Sigmoid colon (tissue), 7 donors: ENCODE measurements at regions of chr12 and their contacts with region 1.

Region 1: GRCh38 chr12:133080368-133081158 is at the start of gene ZNF140:
- DNase-seq: peak; percentile 98
- H3K4me3 ChIP-seq: peak within 1 kb of the TSS; percentile 63 to 90 (median 78)
- H3K27ac ChIP-seq: peak within 1 kb of the TSS; percentile 92 to 98 (median 96)
- H3K4me1 ChIP-seq: peaks cover 0 to 10% (median 4%) of the 10 kb centered on the region in 4 donors
- H3K27me3 ChIP-seq: no peaks in the 10 kb centered on the region
- CTCF ChIP-seq: peak in 2 of 4 experiments; percentile 23 to 38
- EP300 ChIP-seq: peak in 2 of 4 donors; percentile 6 to 24
- POLR2A ChIP-seq: peak; percentile 49 to 56
- total RNA-seq, gene ZNF140: 12.4 to 18.8 (median 15.4) TPM

Region 2: GRCh38 chr12:132610051-132610759 is 470.4 kb before region 1 on chr12 and contains the start of gene LRCOL1:
- intact Hi-C with region 1: no loop called
- DNase-seq: no peak
- H3K4me3 ChIP-seq: peak within 1 kb of the TSS in 2 of 4 donors; percentile 7 to 30
- H3K27ac ChIP-seq: no peak within 1 kb of the TSS
- H3K4me1 ChIP-seq: peaks cover 0 to 10% (median 2%) of the 10 kb centered on the region in 4 donors
- H3K27me3 ChIP-seq: peaks cover 0 to 64% (median 39%) of the 10 kb centered on the region in 3 donors
- CTCF ChIP-seq: no peak
- EP300 ChIP-seq: no peak
- POLR2A ChIP-seq: no peak
- total RNA-seq, gene LRCOL1: 0.49 to 1.4 TPM in 2 of 4 donors, not detected in the others

Region 3: GRCh38 chr12:132729541-132730320 is 350.8 kb before region 1 on chr12:
- intact Hi-C with region 1: no loop called
- DNase-seq: no peak
- H3K4me3 ChIP-seq: no peak overlapping the region
- H3K27ac ChIP-seq: no peak overlapping the region
- H3K4me1 ChIP-seq: no peaks in the 10 kb centered on the region
- H3K27me3 ChIP-seq: no peaks in the 10 kb centered on the region
- CTCF ChIP-seq: no peak
- EP300 ChIP-seq: no peak
- POLR2A ChIP-seq: no peak

Region 4: GRCh38 chr12:132828706-132829534 is 251.6 kb before region 1 on chr12 and contains the start of gene GOLGA3:
- intact Hi-C with region 1: loop called (anchors 5 kb)
- DNase-seq: peak; percentile 96
- H3K4me3 ChIP-seq: peak within 1 kb of the TSS; percentile 67 to 98 (median 86)
- H3K27ac ChIP-seq: peak within 1 kb of the TSS; percentile 89 to 98 (median 92)
- H3K4me1 ChIP-seq: peaks cover 0 to 34% (median 21%) of the 10 kb centered on the region in 4 donors
- H3K27me3 ChIP-seq: no peaks in the 10 kb centered on the region
- CTCF ChIP-seq: no peak
- EP300 ChIP-seq: peak in 1 of 4 donors; percentile 31
- POLR2A ChIP-seq: peak in 1 of 2 donors; percentile 19
- total RNA-seq, gene GOLGA3: 45.7 to 78.4 (median 56.2) TPM

Region 5: DNA sequence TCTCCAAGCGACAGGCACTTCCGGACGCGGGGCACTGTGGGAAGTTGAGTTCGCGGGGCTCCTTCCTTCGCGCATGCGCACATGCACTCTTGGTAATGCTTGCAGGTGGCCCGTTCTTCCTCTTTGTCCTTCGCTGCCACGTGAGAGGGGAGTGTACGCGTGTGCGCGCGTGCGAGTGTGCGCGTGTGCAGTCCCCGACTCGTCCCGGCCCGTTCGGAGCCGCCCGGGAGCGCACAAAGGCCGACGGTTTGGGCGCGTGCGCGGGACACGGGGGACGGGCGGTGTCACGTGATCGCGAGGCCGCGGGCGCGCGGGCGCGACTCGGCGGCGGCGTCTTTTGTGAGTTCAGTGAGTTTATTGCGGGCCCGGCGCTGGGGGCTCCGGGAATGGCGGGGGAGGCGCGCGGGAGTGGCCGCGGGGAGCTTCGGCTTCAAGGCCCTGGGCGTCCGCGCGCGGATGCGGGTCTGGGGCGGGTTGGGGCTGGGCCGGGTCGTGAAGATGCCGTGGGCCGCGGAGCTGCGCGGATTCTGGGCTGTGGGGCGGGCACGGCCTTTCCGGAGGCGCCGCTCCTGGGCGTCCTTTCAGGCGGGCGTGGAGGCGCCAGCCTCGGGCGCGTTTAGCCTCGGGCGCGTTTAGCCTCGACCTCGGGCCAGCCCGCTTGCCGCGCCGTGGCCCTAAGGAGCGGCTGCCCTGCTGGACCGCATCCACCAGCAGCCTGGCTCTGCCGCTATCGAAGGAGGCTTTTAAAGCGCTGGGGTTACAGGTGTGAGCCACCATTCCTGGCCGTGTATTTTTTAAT is 43.2 kb before region 1 on chr12 and contains the start of gene ZNF84:
- intact Hi-C with region 1: loop called (anchors 1 kb)
- DNase-seq: peak; percentile 98
- H3K4me3 ChIP-seq: peak within 1 kb of the TSS; percentile 64 to 84 (median 80)
- H3K27ac ChIP-seq: peak within 1 kb of the TSS; percentile 90 to 97 (median 95)
- H3K4me1 ChIP-seq: peaks cover 0 to 13% (median 3%) of the 10 kb centered on the region in 4 donors
- H3K27me3 ChIP-seq: no peaks in the 10 kb centered on the region
- CTCF ChIP-seq: no peak
- EP300 ChIP-seq: peak in 1 of 4 donors; percentile 68
- POLR2A ChIP-seq: peak; percentile 18 to 33
- total RNA-seq, gene ZNF84: 28.8 to 32.7 (median 31.4) TPM

Region 6: DNA sequence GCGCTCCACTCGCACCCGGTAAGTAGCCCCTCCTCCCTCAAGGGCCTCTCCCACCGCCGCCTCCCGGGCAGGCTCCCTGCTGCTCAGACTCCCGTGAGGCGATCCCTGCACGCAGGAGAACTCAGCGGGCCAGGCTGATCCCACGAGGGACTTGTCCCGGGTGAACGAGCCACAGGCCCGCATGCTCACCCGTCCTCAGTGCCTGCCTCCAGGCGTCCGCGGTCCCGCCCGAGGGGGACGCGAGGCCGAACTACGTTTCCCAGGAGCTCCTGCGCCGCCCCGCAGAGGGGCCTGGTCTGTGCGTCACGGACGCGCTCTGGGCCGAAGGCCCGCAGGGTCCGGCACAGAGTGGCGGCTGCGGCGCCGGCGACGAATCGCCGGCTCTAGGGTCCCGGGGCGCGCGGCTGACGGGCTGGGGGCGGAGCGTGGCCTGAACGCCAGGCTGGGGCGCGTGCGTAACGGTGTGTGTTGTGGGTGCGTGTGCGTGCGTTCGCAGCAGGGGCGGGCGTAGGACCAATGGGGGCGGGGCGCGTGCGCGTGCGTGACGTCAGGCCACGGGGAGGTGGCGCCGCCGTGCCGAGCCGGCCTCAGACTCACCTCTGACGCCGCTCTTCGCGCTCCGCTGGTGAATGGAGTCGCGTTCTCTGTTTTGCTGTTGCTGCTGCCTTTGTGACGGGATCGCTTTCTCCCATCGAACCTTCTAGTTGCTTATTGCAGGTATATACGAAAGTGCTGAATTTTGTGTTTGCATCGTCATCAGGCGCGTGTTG is 49.7 kb after region 1 on chr12 and contains the starts of genes ZNF10 and ZNF891:
- intact Hi-C with region 1: loop called (anchors 1 kb)
- DNase-seq: peak; percentile 98
- H3K4me3 ChIP-seq: peak within 1 kb of the TSS; percentile 77 to 92 (median 82)
- H3K27ac ChIP-seq: peak within 1 kb of the TSS; percentile 95 to 98 (median 96)
- H3K4me1 ChIP-seq: peaks cover 0 to 14% (median 6%) of the 10 kb centered on the region in 4 donors
- H3K27me3 ChIP-seq: no peaks in the 10 kb centered on the region
- CTCF ChIP-seq: no peak
- EP300 ChIP-seq: peak; percentile 15 to 91 (median 74)
- POLR2A ChIP-seq: peak; percentile 69 to 72
- total RNA-seq, gene ZNF10: 10.5 to 22.8 (median 13.1) TPM
- total RNA-seq, gene ZNF891: 3.1 to 6.1 (median 4.4) TPM

Region 7: DNA sequence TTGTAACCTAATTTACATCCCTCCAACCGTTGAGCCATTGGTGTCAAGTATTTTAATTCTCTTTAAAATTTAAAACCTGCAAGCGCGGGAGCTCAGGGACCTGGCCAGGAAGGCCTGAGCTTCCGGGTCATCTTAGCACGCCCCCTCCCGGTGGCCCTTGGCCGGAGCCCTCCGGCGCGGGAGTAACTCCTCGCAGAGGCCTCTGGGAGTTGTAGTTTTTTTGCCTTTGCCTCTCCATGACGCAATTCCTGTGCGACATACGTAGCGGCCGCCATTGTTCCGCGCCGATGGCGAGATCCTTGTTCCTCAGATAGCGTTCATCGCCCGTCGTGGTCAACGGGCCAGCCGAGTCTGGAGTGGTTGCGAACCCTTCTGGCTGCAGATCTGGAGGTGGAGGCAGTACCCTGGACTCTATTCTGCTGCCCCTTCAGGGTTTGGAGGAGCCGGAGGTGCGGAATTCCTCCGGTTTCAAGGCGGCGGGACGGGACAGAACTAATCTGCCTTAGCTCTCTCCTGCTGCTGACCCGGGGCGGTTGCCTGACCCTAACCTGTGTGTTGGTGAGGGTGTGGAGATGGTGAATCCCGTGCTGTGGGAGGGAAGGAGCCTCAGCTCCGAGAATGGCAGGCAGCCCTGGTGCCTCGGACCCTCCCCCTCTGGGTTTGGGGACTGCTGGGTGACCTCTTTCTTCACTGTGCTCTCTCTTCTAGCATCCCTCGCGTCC is 100.8 kb after region 1 on chr12 and contains the start of gene ZNF268:
- intact Hi-C with region 1: loop called (anchors 1 kb)
- DNase-seq: peak; percentile 94
- H3K4me3 ChIP-seq: peak within 1 kb of the TSS; percentile 64 to 82 (median 76)
- H3K27ac ChIP-seq: peak within 1 kb of the TSS; percentile 69 to 81 (median 76)
- H3K4me1 ChIP-seq: peaks cover 0 to 13% (median 6%) of the 10 kb centered on the region in 4 donors
- H3K27me3 ChIP-seq: no peaks in the 10 kb centered on the region
- CTCF ChIP-seq: peak; percentile 45 to 68 (median 58)
- EP300 ChIP-seq: peak in 2 of 4 donors; percentile 13 to 19
- POLR2A ChIP-seq: no peak
- total RNA-seq, gene ZNF268: 12.8 to 21.9 (median 19.5) TPM